Activated CD4-positive, alpha-beta memory T cell treated with anti-CD3 and anti-CD28 coated beads for 36 hours (primary cell): ENCODE measurements at regions of chr10 and their contacts with region 1.

Region 1: DNA sequence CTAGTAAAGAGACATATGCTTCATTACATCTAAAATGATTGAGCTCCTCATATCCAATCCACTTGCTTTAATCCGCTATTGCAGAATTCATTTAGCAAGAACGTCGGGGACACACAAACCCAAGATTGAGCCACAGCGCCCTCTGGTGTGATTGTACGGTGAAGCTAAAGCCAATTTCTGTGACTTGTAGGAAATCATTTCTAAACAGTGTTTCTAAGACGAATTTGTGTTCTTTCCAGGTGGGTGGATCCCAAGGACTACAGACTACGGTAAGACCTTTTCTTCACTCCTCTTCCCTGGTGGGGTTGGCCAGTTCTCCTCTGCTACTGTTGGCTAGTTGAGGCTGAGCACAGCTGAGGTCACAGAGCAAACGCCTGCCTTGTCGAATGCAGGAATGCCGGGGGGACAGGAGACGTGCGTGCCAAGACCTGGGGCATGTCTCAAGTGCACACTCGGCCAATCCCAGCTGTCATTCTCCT is 5.2 kb downstream of the DMBT1 start:
- DNase-seq: peak; percentile 83
- H3K4me3 Mint-ChIP-seq: no peak overlapping the region
- H3K27ac Mint-ChIP-seq: no peak overlapping the region
- H3K4me1 Mint-ChIP-seq: peaks cover 10% of the 10 kb centered on the region
- H3K27me3 Mint-ChIP-seq: peaks cover 6% of the 10 kb centered on the region

Region 2: GRCh38 chr10:121927841-121928527 is 637.8 kb before region 1 on chr10 and contains the start of gene ATE1:
- CTCF ChIA-PET with region 1: no interaction called
- POLR2A ChIA-PET with region 1: no interaction called
- intact Hi-C with region 1: no loop called
- DNase-seq: peak; percentile 87
- H3K4me3 Mint-ChIP-seq: peak within 1 kb of the TSS; percentile 94
- H3K27ac Mint-ChIP-seq: peak within 1 kb of the TSS; percentile 95
- H3K4me1 Mint-ChIP-seq: peaks cover 27% of the 10 kb centered on the region
- H3K27me3 Mint-ChIP-seq: no peaks in the 10 kb centered on the region
- total RNA-seq, gene ATE1: 19.4 to 23.1 TPM

Region 3: GRCh38 chr10:122342293-122343134 is 223.3 kb before region 1 on chr10:
- CTCF ChIA-PET with region 1: interaction called, 13 read pairs
- POLR2A ChIA-PET with region 1: no interaction called
- intact Hi-C with region 1: loop called (anchors 1 kb)
- DNase-seq: peak; percentile 68
- H3K4me3 Mint-ChIP-seq: no peak overlapping the region
- H3K27ac Mint-ChIP-seq: no peak overlapping the region
- H3K4me1 Mint-ChIP-seq: peaks cover 8% of the 10 kb centered on the region
- H3K27me3 Mint-ChIP-seq: peaks cover 3% of the 10 kb centered on the region

Region 4: DNA sequence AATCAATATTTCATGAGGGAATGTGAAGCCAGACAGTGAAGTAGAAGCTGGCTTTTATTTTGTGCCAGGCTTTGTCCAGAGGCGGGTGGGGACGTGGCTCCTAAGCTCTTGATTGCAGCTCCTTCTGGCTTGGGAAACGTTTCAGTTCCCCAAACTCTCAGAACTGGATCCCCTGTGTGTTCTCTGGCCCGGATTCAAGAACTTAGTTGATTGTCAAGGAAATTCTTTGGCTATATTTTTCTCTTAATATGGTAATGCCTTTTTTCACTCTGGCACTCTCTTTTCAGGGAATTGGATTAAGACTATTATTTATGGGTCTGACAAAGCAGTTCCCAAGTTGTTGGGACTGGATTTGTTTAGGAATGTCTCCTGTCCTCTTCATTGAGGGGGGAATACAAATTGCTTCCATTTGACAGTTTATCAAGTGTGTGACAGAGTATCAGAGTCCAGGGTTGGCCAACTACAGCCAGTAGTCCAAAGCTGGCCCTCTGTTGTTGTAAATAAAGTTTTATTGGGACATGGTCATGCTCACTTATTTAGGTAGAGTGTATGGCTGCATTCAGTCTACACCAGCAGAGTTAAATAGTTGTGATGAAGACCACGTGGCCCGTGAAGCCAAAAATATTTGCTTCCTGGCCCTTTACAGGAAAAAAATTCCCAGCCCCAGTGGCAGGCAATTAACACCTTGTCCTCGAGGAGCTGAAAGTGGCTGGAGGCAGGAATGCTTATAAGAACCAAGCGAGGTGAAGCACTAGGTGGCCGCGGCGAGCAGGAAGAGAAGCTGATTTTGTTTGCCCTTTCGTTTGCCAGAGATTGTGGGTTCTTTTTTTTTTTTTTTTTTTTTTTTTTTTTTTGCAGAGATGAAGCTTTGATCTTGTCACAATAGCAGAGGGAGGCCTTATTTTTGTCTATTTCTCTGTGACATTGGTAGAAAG is 70.1 kb before region 1 on chr10:
- CTCF ChIA-PET with region 1: interaction called, 17 read pairs
- POLR2A ChIA-PET with region 1: no interaction called
- intact Hi-C with region 1: no loop called
- DNase-seq: peak; percentile 26
- H3K4me3 Mint-ChIP-seq: no peak overlapping the region
- H3K27ac Mint-ChIP-seq: no peak overlapping the region
- H3K4me1 Mint-ChIP-seq: peaks cover 34% of the 10 kb centered on the region
- H3K27me3 Mint-ChIP-seq: peaks cover under 1% of the 10 kb centered on the region

Region 5: GRCh38 chr10:122515588-122516231 is 50.1 kb before region 1 on chr10:
- CTCF ChIA-PET with region 1: interaction called, 31 read pairs
- POLR2A ChIA-PET with region 1: no interaction called
- intact Hi-C with region 1: no loop called
- DNase-seq: peak; percentile 80
- H3K4me3 Mint-ChIP-seq: no peak overlapping the region
- H3K27ac Mint-ChIP-seq: no peak overlapping the region
- H3K4me1 Mint-ChIP-seq: peaks cover 34% of the 10 kb centered on the region
- H3K27me3 Mint-ChIP-seq: peaks cover 3% of the 10 kb centered on the region

Region 6: DNA sequence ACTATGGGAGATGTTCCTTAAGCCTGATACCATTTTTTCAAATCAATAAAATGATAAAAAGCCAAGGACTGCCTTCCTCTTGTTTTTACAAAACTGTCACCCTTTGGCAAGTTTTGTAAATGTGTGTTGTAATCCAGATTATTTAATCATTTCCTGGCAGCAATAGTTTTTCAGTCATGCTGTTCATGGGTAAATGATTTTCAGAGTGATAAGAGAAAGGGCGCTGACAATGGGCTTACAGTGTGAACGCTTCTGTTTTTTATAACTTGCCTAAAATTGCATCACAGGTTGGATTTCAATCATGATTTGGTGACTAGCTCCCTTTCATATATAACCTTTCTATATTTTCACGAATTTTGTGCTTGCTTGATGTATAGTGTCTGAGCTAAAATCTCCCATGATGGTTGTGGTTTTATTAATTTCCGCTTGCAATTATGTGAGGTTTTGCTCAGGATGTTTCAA is 24.2 kb before region 1 on chr10:
- CTCF ChIA-PET with region 1: interaction called, 18 read pairs
- POLR2A ChIA-PET with region 1: no interaction called
- intact Hi-C with region 1: no loop called
- DNase-seq: no peak
- H3K4me3 Mint-ChIP-seq: no peak overlapping the region
- H3K27ac Mint-ChIP-seq: no peak overlapping the region
- H3K4me1 Mint-ChIP-seq: peaks cover 47% of the 10 kb centered on the region
- H3K27me3 Mint-ChIP-seq: no peaks in the 10 kb centered on the region

Region 7: GRCh38 chr10:122577311-122577885 is 11.6 kb after region 1 on chr10:
- CTCF ChIA-PET with region 1: interaction called, 18 read pairs
- POLR2A ChIA-PET with region 1: interaction called, 3 read pairs
- intact Hi-C with region 1: no loop called
- DNase-seq: no peak
- H3K4me3 Mint-ChIP-seq: no peak overlapping the region
- H3K27ac Mint-ChIP-seq: no peak overlapping the region
- H3K4me1 Mint-ChIP-seq: no peaks in the 10 kb centered on the region
- H3K27me3 Mint-ChIP-seq: peaks cover under 1% of the 10 kb centered on the region

Region 8: DNA sequence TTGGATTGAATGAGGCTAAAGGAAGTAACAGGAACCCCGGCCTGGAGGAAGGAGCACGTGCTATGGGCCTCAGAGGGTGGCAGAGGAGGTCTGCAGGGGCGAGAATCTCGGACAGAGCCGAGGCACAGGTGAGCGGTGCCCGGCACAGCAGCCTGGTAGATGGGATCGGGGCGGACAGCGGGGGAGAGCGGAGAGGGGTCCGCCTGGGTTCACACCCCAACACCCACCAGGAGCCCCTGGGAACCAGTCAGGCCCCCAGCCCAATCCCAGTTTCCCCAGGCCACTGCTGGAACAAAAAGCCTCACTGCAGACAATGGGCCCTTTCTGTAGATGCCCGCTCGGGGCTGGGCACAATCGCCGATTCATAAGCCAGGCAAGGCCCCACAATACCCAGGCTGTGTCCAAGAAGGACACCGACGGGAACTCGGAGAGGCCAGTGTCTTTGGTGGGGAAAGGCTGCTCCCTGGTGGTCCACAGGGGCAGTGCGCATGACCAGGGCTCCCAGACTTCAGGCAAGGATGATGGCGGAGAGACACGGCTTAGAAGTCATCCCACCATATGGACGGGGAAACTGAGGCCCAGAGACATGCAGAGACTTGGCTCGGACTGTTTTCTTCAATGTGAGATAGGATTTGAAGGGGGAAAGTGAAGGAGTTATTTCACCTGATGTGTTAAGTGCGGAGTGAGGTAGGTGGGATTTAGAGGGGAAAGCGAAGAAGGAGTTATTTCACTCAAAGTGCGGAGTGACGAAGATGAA is 993.5 kb after region 1 on chr10:
- CTCF ChIA-PET with region 1: interaction called, 4 read pairs
- POLR2A ChIA-PET with region 1: no interaction called
- intact Hi-C with region 1: loop called (anchors 5 kb)
- DNase-seq: peak; percentile 73
- H3K4me3 Mint-ChIP-seq: no peak overlapping the region
- H3K27ac Mint-ChIP-seq: no peak overlapping the region
- H3K4me1 Mint-ChIP-seq: no peaks in the 10 kb centered on the region
- H3K27me3 Mint-ChIP-seq: peaks cover 5% of the 10 kb centered on the region